ENCODE measurements at regions of chr10 and their contacts with region 1.

Region 1: GRCh38 chr10:101174319-101174718 is 43.2 kb downstream of the TLX1 start:
- H3K4me3 ChIP-seq: no peak overlapping the region
- H3K27ac ChIP-seq: no peak overlapping the region
- H3K4me1 ChIP-seq: no peaks in the 10 kb centered on the region
- CTCF ChIP-seq: no peak

Region 2: DNA sequence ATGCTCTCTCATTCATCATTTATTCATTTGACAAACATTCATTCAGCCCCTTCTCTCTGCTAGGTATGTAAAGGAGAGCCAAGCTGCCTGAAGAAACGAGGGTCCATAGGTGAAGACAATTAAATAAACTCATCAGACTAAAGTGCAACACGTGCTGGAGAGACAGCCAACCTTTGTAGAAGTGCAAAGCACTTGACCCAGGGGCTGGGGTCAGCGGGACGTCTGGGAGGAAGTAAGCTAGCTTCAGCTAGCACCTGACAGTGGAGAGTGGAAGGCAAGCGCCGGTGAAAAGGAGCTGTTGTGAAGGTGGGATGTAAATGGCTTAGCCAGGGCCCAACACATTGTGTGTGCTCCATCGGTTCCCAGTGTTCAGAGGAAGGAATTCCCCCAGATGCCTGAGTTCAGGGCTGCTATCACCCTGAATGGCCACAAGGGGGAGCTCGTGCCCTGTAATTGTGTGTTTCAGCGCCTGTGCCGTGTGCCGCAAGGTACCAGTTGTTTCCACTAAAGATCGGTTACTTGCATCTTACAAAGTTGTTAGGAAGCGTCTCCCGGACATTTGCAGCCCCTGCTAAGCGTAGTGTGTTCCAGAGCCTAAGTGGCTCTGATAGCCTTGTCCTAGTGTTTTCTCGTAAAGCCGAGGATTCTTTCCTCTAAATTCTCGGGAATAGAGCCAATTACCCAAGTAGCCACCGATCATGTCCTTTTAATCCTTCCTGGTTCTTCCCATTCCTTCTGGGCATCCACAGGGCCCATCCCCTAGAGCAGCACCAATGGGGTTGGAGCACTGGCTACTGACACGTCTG is 12.6 kb before region 1 on chr10:
- CTCF ChIA-PET with region 1: interaction called, 11 read pairs
- POLR2A ChIA-PET with region 1: interaction called, 4 read pairs
- H3K4me3 ChIP-seq: peak overlapping the region; percentile 21
- H3K27ac ChIP-seq: no peak overlapping the region
- H3K4me1 ChIP-seq: peaks cover 6% of the 10 kb centered on the region; the same call in 1 of the 2 replicates
- CTCF ChIP-seq: peak; percentile 93